Motor neuron (in vitro differentiated cells): ENCODE measurements at regions of chr4 and their contacts with region 1.

Region 1: DNA sequence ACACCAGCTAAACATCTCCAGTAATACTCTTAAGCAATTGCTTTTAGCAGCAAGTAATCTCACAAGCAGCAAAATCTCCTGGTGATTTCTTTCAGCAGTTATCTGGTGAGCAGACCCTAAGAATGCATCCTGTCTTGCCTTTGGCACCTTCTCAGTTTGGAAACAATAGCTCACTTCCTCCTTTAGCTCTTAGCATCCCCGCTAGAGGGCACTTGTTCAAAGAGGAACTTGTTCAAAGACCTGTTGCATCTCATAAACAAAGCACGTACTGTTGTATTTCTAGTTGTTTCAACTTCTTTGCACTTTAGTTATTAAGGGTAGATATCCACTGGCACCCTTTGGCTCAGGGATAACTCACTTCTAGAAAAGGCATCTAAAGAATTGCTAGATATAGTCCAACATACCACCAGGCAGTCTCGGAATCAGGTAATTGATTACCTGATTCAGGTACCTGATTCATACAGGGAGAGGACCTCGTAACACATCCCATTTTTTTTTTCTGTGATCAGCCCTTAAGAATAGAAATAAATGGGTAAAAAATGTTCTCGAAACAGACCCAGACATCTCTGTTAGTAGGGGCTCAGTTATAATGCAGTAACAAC is 81.9 kb upstream of the QRFPR start:
- ATAC-seq: peak in 3 of 8 experiments; percentile 75 to 78 (median 77)
- H3K4me3 ChIP-seq: no peak overlapping the region
- H3K27ac ChIP-seq: no peak overlapping the region
- H3K4me1 ChIP-seq: no peaks in the 10 kb centered on the region

Region 2: GRCh38 chr4:121380776-121381462 is 81.8 kb before region 1 on chr4 and contains the start of gene QRFPR:
- in situ Hi-C with region 1: no loop called
- ATAC-seq: peak in 7 of 8 experiments; percentile 20 to 73 (median 54)
- H3K4me3 ChIP-seq: peak within 1 kb of the TSS; percentile 23 to 40 (median 25)
- H3K27ac ChIP-seq: no peak within 1 kb of the TSS
- H3K4me1 ChIP-seq: no peaks in the 10 kb centered on the region
- total RNA-seq, gene QRFPR: 0.21 to 0.90 (median 0.27) TPM in 3 of 8 experiments, not detected in the others

Region 3: GRCh38 chr4:121726642-121727268 is 264.0 kb after region 1 on chr4:
- in situ Hi-C with region 1: loop called in 1 of 9 experiments (anchors 25 kb)
- ATAC-seq: peak in 7 of 8 experiments; percentile 38 to 80 (median 61)
- H3K4me3 ChIP-seq: no peak overlapping the region
- H3K27ac ChIP-seq: no peak overlapping the region
- H3K4me1 ChIP-seq: no peaks in the 10 kb centered on the region